Posterior cingulate gyrus (tissue), 11 donors: ENCODE measurements at regions of chr15 and their contacts with region 1.

Region 1: GRCh38 chr15:55407949-55408791 is at the starts of genes CCPG1 and PIERCE2:
- DNase-seq: peak; percentile 78 to 98 (median 91)

Region 2: GRCh38 chr15:55318588-55319494 is 89.3 kb before region 1 on chr15 and contains the starts of genes PIGB and PIGBOS1:
- intact Hi-C with region 1: loop called (anchors 5 kb)
- DNase-seq: peak; percentile 73 to 97 (median 84)